Activated T-helper 1 cell treated with anti-CD3 and anti-CD28 coated beads, Interleukin-12 subunit alpha, Interleukin-12 subunit beta, Interleukin-2, Interleukin-4 antibody, amounts not matched to agents 30 ng/mL and 10 ng/mL and 1 ng/mL, durations not matched to agents 14 hours and 24 hours and 36 hours (primary cell): ENCODE measurements at regions of chr11 and their contacts with region 1.

Region 1: DNA sequence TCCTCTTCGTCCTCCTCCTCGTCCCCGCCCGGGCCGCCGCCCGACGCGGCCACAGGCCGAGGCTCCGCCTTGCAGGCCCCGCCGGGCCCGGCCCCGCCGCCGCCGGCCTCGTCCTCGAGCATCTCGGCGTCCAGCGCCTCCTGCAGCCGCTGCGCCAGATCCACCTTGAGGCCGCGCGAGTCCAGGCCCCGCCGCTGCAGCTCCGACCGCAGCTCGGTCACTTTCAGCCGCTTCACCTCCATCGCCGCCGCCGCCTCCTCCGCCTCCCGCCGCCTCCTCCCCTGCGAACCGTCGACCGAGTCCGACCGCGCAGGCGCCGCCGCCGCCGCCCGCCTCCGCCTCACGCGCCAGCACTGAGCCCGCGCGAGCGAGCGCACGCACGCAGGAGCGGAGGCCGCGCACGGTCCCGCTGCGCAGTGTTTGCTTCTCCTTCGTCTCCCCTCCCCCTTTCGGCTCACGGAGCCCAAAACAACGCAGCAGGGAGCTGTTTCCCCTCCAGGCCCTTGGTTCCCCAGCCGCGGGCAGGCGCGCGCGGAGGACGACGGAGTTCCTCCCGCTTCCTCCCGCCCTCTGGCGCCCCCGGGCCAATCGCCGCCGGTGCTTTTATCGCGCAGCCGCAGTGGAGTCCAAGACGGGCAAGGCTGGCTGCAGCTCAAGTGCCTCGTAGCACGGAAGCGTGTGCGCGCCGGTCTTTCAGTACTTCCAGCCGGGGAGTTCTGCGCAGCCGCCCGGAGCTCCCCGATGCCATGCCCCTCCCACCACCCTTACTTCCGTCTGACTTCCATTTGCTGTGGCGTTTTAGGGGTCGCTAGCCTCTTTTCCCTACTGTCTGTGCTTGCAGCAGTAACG is at the start of gene HNRNPUL2:
- DNase-seq: peak; percentile 99
- H3K4me3 Mint-ChIP-seq: peak within 1 kb of the TSS; percentile 91
- H3K27ac Mint-ChIP-seq: peak within 1 kb of the TSS; percentile 99
- H3K4me1 Mint-ChIP-seq: peaks cover 45% of the 10 kb centered on the region
- H3K27me3 Mint-ChIP-seq: no peaks in the 10 kb centered on the region
- total RNA-seq, gene HNRNPUL2: 53.0 and 55.2 TPM in 2 replicates

Region 2: DNA sequence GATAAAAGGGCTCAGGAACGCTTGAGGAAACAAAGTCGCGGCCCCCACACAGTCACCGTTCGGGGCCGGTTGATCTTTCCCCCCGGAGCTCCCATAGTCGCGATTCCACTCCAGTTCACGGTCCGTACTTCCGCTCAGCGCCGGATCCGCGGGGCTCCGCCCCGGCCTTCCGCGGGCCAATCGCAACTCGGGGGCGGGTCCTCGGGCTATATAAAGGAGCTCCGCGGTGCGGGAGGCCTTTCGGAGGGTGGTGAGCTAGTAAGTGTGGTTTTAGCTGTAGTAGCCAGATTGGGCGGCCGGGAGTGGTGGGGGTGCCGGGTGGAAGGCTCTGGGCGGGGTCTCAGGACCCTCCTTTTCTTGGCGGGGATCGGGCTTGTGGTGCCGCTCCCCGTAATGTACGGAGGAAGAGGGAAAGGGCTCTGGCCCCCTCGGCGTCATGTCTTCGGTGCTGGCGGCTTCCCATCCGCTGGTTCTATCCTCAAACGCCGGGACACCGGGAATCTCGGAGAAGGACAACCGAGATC is 62.0 kb before region 1 on chr11 and contains the starts of genes C11orf98 and CSKMT:
- intact Hi-C with region 1: loop called (anchors 1 kb)
- DNase-seq: peak; percentile 97
- H3K4me3 Mint-ChIP-seq: peak within 1 kb of the TSS; percentile 98
- H3K27ac Mint-ChIP-seq: peak within 1 kb of the TSS; percentile 81
- H3K4me1 Mint-ChIP-seq: peaks cover 33% of the 10 kb centered on the region
- H3K27me3 Mint-ChIP-seq: no peaks in the 10 kb centered on the region
- total RNA-seq, gene C11orf98: 146 and 151 TPM in 2 replicates
- total RNA-seq, gene CSKMT: 65.0 and 69.4 TPM in 2 replicates

Region 3: GRCh38 chr11:62705880-62706849 is 21.0 kb before region 1 on chr11:
- intact Hi-C with region 1: loop called (anchors 1 kb)
- DNase-seq: peak; percentile 89
- H3K4me3 Mint-ChIP-seq: peak overlapping the region; percentile 89
- H3K27ac Mint-ChIP-seq: peak overlapping the region; percentile 79
- H3K4me1 Mint-ChIP-seq: peaks cover 49% of the 10 kb centered on the region
- H3K27me3 Mint-ChIP-seq: no peaks in the 10 kb centered on the region

Region 4: DNA sequence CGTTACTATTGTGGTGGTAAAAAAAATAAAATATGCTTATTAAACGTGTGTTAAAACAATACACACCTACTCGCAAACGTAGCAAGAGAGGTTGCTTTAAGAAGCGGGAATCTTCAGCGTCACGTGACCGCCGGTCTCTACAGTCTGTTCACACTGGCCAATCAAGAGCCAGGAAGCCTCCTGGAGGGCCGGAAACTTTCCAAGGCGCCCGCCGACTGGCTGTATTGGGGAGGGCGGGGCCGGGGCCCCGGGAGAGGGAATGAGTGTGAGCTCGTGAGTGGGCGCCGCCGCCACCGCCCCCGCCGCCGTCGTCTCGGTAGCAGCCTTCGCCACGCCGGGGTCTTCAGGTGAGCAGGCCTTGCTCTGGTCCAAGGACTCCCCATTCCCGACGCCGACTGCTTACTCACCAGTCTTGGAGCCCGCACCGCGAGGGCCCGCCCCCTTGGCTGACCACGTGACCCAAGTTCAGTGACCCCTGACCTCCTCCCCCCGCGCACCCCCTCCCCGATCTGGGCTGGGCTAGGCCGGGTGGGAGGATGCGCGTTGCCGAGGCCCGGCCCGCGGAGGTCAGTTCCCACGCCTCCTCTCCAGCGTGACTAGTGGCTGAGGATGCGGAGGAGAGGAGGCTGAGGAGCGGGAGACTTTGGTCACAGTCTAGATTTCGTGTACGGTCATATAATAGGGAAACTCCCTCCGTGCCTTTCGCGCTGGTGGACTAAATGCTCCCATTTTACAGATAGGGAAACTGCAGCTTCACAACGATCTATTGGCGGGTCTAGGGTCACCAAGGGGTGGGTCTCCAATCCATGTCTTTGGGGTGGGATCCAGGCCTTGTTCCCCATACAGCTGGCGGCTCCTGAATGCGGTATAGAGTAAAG is 44.2 kb after region 1 on chr11 and contains the start of gene TAF6L:
- intact Hi-C with region 1: loop called (anchors 1 kb)
- DNase-seq: peak; percentile 91
- H3K4me3 Mint-ChIP-seq: peak within 1 kb of the TSS; percentile 89
- H3K27ac Mint-ChIP-seq: peak within 1 kb of the TSS; percentile 91
- H3K4me1 Mint-ChIP-seq: peaks cover 30% of the 10 kb centered on the region
- H3K27me3 Mint-ChIP-seq: no peaks in the 10 kb centered on the region
- total RNA-seq, gene TAF6L: 19.4 and 20.7 TPM in 2 replicates

Region 5: GRCh38 chr11:62831520-62832335 is 104.6 kb after region 1 on chr11 and contains the start of gene STX5:
- intact Hi-C with region 1: loop called (anchors 1 kb)
- DNase-seq: peak; percentile 99
- H3K4me3 Mint-ChIP-seq: peak within 1 kb of the TSS; percentile 93
- H3K27ac Mint-ChIP-seq: peak within 1 kb of the TSS; percentile 99
- H3K4me1 Mint-ChIP-seq: peaks cover 41% of the 10 kb centered on the region
- H3K27me3 Mint-ChIP-seq: no peaks in the 10 kb centered on the region
- total RNA-seq, gene STX5: 34.2 and 39.9 TPM in 2 replicates

Region 6: DNA sequence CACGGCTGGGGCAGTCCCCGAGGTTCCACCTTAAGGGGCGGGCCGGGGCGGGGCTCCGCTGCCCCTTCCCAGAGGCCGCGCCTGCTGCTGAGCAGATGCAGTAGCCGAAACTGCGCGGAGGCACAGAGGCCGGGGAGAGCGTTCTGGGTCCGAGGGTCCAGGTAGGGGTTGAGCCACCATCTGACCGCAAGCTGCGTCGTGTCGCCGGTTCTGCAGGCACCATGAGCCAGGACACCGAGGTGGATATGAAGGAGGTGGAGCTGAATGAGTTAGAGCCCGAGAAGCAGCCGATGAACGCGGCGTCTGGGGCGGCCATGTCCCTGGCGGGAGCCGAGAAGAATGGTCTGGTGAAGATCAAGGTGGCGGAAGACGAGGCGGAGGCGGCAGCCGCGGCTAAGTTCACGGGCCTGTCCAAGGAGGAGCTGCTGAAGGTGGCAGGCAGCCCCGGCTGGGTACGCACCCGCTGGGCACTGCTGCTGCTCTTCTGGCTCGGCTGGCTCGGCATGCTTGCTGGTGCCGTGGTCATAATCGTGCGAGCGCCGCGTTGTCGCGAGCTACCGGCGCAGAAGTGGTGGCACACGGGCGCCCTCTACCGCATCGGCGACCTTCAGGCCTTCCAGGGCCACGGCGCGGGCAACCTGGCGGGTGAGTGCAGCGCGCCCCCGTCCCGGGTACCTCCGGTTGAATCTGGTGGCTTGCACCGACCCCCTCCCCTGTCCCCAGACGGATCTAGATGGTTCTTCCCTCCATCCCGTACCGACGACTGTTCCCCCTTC is 153.9 kb after region 1 on chr11 and contains the start of gene SLC3A2:
- intact Hi-C with region 1: loop called (anchors 2 kb)
- DNase-seq: peak; percentile 83
- H3K4me3 Mint-ChIP-seq: peak within 1 kb of the TSS; percentile 99
- H3K27ac Mint-ChIP-seq: peak within 1 kb of the TSS; percentile 100
- H3K4me1 Mint-ChIP-seq: peaks cover 52% of the 10 kb centered on the region
- H3K27me3 Mint-ChIP-seq: peaks cover 2% of the 10 kb centered on the region
- total RNA-seq, gene SLC3A2: 397 and 399 TPM in 2 replicates